ENCODE measurements at regions of chr12 and their contacts with region 1.

Region 1: GRCh38 chr12:121230538-121230907 is 20.6 kb downstream of the P2RX4 start:
- DNase-seq: no peak
- H3K4me3 Mint-ChIP-seq: no peak overlapping the region
- H3K27ac Mint-ChIP-seq: no peak overlapping the region
- H3K4me1 Mint-ChIP-seq: peaks cover 19% of the 10 kb centered on the region
- H3K27me3 Mint-ChIP-seq: no peaks in the 10 kb centered on the region

Region 2: DNA sequence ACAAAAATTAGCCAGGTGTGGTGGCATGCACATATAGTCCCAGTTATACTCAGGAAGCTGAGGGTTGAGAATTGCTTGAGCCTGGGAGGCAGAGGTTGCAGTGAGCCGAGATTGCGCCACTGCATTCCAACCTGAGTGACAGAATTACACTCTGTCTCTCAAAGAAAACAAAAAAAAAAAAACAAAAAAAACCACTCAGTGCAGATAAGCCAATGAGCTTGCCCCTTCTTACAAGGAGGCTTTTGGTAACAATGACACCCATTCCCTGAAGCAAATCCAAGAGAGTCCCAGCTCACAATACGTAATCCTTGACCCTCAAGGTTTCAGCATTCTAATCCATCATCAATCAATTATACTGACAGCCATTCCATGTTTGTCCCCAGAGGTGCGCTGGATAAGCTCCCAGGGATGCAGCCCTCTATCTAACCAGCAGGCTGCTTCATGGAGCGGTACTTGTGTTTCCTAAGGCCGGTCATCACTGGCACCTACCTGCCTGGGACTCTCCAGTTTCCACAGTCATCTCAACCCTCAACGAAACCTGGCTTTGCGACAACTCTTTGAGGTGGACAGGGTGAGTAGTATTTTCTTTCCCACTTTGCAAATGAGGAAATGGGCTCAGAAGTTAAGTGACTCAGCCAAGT is 1048.4 kb before region 1 on chr12:
- CTCF ChIA-PET with region 1: no interaction called
- POLR2A ChIA-PET with region 1: no interaction called
- intact Hi-C with region 1: no loop called
- DNase-seq: no peak
- H3K4me3 Mint-ChIP-seq: no peak overlapping the region
- H3K27ac Mint-ChIP-seq: no peak overlapping the region
- H3K4me1 Mint-ChIP-seq: peaks cover 8% of the 10 kb centered on the region
- H3K27me3 Mint-ChIP-seq: no peaks in the 10 kb centered on the region

Region 3: GRCh38 chr12:121240484-121241101 is 10.1 kb after region 1 on chr12:
- CTCF ChIA-PET with region 1: interaction called, 36 read pairs
- POLR2A ChIA-PET with region 1: interaction called, 9 read pairs
- intact Hi-C with region 1: no loop called
- DNase-seq: peak; percentile 88
- H3K4me3 Mint-ChIP-seq: peak overlapping the region; percentile 57
- H3K27ac Mint-ChIP-seq: peak overlapping the region; percentile 79
- H3K4me1 Mint-ChIP-seq: peaks cover 32% of the 10 kb centered on the region
- H3K27me3 Mint-ChIP-seq: no peaks in the 10 kb centered on the region

Region 4: GRCh38 chr12:121252712-121253345 is 22.3 kb after region 1 on chr12:
- CTCF ChIA-PET with region 1: no interaction called
- POLR2A ChIA-PET with region 1: no interaction called
- intact Hi-C with region 1: no loop called
- DNase-seq: no peak
- H3K4me3 Mint-ChIP-seq: no peak overlapping the region
- H3K27ac Mint-ChIP-seq: no peak overlapping the region
- H3K4me1 Mint-ChIP-seq: peaks cover 3% of the 10 kb centered on the region
- H3K27me3 Mint-ChIP-seq: no peaks in the 10 kb centered on the region